HEK293 (cell line): ENCODE measurements at regions of chr10 and their contacts with region 1.

Region 1: GRCh38 chr10:88835096-88835909 is 16.3 kb downstream of the ANKRD22 start:
- H3K4me3 ChIP-seq: no peak overlapping the region
- H3K27ac ChIP-seq: no peak overlapping the region
- H3K4me1 ChIP-seq: 0 out of 2 replicates have a peak, but pooled peaks cover 3% of the 10 kb centered on the region
- CTCF ChIP-seq: peak; percentile 72

Region 2: GRCh38 chr10:88565072-88565471 is 270.2 kb before region 1 on chr10:
- CTCF ChIA-PET with region 1: interaction called, 20 read pairs
- POLR2A ChIA-PET with region 1: interaction called, 6 read pairs
- H3K4me3 ChIP-seq: no peak overlapping the region
- H3K27ac ChIP-seq: no peak overlapping the region
- H3K4me1 ChIP-seq: no peaks in the 10 kb centered on the region
- CTCF ChIP-seq: no peak; the same call in 1 of the 2 replicates

Region 3: DNA sequence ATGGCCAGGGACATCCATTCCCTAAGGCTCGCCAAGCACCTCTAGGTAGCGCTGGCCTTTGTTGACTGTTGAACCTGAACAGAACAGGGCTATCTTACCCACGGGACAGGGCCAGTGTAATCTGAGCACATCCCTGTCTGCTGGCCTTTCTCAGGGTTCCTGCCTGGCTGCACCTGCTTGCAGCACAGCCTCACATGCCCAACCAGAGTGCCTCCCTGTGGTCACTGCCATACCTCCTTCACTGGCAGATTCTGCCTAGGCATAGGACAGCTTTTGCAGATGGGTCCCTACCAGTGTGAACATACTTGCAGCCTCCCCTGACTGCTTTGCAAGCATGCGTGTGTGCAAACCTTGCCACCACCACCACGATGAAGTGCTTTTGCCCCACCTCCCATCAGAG is 91.3 kb before region 1 on chr10:
- CTCF ChIA-PET with region 1: no interaction called
- POLR2A ChIA-PET with region 1: no interaction called
- H3K4me3 ChIP-seq: no peak overlapping the region
- H3K27ac ChIP-seq: no peak overlapping the region
- H3K4me1 ChIP-seq: no peaks in the 10 kb centered on the region
- CTCF ChIP-seq: no peak

Region 4: DNA sequence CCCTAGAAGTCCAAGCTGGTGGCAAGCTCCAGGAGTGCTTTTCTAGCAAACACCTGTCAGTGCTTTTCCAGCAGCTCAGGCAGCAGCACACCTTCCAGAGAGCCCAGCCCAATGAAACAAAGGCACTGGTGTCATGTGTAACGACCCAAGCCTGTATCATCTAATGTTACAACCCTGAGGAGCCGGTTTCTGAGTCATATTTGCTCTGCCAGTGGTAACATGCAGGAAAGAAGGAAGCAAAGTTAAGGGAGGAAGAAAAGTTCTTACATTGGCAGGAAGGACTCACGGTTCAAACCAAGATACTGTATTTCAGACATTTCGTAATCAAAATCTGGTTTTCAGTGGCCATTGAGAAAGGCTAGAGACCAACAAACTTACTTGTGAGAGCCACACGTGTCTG is 16.4 kb after region 1 on chr10 and contains the start of gene ANKRD22:
- CTCF ChIA-PET with region 1: interaction called, 46 read pairs
- POLR2A ChIA-PET with region 1: no interaction called
- H3K4me3 ChIP-seq: no peak within 1 kb of the TSS
- H3K27ac ChIP-seq: no peak within 1 kb of the TSS
- H3K4me1 ChIP-seq: peaks cover 4% of the 10 kb centered on the region; the same call in 1 of the 2 replicates
- CTCF ChIP-seq: no peak

Region 5: DNA sequence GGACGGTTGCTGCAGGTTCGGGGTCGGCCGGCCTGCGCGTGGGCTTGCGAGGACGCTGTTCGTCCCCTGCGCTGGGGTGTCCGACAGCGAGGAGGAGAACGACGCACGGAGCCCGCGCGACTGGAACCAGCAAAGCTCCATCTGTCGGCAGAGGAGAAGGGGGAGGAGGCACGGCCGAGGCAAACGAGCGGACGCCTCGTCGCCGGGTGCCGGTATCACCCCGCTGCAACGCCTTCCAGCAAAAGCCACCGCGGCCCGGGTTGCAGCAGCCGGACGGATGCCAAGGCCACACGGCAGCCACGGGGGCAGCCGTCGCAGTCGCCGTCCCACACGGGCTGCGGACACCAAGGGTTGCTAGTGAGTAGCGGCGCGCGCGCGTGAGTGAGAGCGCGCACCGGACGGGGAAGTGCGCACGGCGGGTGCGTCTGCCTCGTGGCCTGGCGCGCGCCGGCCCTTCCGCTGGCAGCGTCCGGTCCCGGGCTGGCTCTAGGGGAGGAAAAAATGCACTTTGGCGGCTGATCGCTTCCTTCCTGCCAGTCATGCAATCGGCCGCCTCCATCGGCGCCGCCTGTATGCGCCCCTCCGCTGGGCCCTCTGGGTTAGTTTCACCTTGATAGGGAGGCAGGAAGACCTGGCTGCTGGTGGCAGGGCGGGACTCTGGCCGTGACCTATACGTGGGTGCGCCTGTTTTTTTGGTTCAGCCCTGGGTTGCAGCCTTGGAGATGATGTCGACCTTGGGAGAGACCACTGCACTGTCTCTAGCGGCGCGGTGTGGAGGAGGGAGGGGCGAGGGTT is 45.2 kb after region 1 on chr10:
- CTCF ChIA-PET with region 1: interaction called, 11 read pairs
- POLR2A ChIA-PET with region 1: interaction called, 4 read pairs
- H3K4me3 ChIP-seq: peak overlapping the region; percentile 66
- H3K27ac ChIP-seq: peak overlapping the region; percentile 94
- H3K4me1 ChIP-seq: peaks cover 29% of the 10 kb centered on the region
- CTCF ChIP-seq: peak; percentile 93

Region 6: GRCh38 chr10:88901206-88901983 is 66.1 kb after region 1 on chr10:
- CTCF ChIA-PET with region 1: interaction called, 12 read pairs
- POLR2A ChIA-PET with region 1: no interaction called
- H3K4me3 ChIP-seq: no peak overlapping the region
- H3K27ac ChIP-seq: no peak overlapping the region
- H3K4me1 ChIP-seq: peaks cover 16% of the 10 kb centered on the region
- CTCF ChIP-seq: no peak

Region 7: DNA sequence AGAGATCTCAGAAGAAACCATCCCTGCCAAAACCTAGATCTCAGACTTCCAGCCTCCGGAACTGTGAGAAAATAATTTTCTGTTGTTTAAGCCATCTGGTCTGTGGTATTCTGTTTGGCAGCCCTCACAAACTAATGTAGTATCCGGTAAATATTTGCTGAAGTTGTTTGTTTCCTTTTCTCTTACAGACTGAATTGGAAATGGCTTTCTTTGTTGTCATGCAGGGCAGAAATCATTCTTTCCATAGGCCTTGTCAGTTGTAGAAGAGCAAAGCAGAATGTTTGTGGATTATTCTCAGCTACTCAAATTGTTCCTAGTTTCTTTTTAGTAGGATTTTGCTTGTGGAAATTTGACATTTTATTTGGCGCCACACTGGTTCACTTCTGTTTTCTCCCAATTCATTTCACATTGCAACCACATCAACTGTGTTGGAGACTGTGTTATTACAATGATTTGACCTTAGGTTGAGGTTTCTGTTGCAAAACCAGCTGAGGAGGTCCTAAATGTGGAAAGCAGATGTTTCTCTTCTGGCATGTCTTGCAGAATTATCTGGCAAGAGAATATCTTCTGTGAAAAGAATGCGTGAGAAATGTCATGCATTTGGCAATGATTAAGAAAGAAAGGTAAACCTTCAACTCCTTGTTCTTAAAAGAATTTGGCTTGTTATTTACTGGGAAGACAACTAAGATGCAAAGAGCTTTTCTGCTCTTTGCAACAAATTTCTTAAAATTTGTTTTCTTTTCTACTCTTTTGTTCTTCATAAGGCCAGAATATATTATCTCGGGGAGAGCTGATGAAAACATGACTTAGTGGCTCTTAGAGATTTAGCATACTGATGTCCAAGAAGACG is 91.5 kb after region 1 on chr10:
- CTCF ChIA-PET with region 1: interaction called, 456 read pairs
- POLR2A ChIA-PET with region 1: no interaction called
- H3K4me3 ChIP-seq: no peak overlapping the region
- H3K27ac ChIP-seq: no peak overlapping the region
- H3K4me1 ChIP-seq: no peaks in the 10 kb centered on the region
- CTCF ChIP-seq: no peak

Region 8: GRCh38 chr10:88990384-88991160 is 155.3 kb after region 1 on chr10 and contains the start of gene FAS:
- CTCF ChIA-PET with region 1: interaction called, 15 read pairs
- POLR2A ChIA-PET with region 1: no interaction called
- H3K4me3 ChIP-seq: peak within 1 kb of the TSS; percentile 86
- H3K27ac ChIP-seq: peak within 1 kb of the TSS; percentile 97
- H3K4me1 ChIP-seq: peaks cover 16% of the 10 kb centered on the region
- CTCF ChIP-seq: no peak